Left cardiac atrium (tissue), 4 donors: ENCODE measurements at regions of chr7 and their contacts with region 1.

Region 1: DNA sequence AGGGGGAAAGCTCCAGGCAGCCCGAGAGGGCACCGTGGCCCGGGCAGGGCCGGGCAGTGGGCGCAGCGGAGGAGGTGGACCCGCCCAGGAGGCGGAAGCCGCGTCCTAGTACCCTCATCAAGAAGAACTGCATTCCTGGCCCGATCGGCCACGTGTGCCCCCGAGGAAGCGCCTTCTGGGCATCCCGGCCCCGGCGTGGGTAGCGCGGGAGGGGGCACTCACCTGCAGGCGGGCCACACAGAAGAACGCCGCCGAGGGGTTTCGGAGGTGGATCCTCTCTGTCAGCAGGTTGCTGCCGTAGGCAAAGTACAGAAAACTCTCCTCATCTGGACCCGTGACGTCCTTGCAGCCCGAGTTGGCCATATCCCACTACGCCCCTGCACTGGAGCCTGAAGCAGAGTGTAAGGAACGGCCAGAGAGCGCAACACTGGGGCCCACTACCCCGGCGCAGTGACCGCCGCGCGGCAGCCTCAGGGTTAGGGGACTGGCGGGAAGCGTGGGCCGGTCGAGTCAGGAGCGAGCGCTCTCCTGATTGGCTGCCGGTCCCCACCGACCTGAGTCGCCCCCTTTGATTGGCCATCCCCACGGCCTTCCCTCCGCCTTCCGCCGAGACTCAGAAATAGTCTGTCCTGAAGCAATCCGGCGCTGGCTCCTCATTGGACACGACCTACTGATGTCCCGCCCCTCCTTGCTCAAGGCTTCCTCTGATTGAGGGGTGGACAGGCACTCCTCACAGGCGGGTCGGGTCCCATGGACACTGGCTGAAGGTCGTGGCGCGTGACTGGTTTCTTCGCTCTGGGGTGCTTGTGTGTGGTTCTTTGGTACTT is at the start of gene GGCT:
- DNase-seq: peak; percentile 100
- ATAC-seq: peak; percentile 99
- total RNA-seq, gene GGCT: 22.0 to 31.7 TPM

Region 2: GRCh38 chr7:30445770-30446169 is 58.8 kb before region 1 on chr7:
- intact Hi-C with region 1: loop called in 1 of 2 experiments (anchors 10 kb)
- DNase-seq: peak; percentile 83
- ATAC-seq: peak; percentile 80 to 83

Region 3: GRCh38 chr7:30478349-30479201 is 26.0 kb before region 1 on chr7 and contains the start of gene NOD1:
- intact Hi-C with region 1: loop called in 1 of 2 experiments (anchors 2 kb)
- DNase-seq: peak; percentile 87
- ATAC-seq: peak; percentile 92 to 94
- total RNA-seq, gene NOD1: 10.6 to 18.1 TPM